Vagina (tissue), 2 donors: ENCODE measurements at regions of chr10 and their contacts with region 1.

Region 1: DNA sequence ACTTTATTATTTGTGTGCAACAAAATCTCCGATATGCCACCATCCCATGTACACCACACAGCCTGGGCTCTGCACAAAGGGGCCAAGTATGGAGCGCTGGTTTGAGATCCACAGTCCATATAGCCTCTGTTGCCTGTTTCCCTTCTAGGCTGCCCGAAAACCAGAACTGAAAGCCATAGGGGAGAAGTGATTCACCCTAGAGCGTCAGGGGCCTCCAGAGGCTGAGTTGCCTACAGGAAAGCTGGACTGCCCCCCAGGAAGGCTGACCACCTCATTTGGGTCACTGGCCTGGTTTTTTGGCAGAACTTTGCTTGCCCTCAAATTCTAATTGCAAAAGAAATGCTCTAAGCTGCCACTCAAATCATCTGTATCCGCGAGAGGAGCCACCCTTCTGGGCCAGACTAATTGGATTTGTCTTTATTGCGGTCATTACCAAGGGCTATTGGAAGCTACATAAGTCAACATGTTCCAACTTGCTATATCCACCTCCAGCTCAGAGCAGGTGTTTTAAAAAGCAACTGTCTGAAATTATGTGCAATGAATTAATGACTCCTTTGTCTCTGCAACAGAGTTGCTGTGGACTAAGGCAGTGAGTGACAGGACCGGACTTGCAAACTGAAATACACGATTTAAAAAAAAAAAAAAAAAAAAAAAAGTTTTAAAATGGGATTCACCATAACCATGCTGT is 28.3 kb upstream of the FRMD4A start:
- DNase-seq: peak in 1 of 2 donors; percentile 44
- H3K4me3 ChIP-seq: no peak overlapping the region
- H3K27ac ChIP-seq: no peak overlapping the region
- H3K4me1 ChIP-seq: no peaks in the 10 kb centered on the region
- H3K27me3 ChIP-seq: no peaks in the 10 kb centered on the region
- CTCF ChIP-seq: no peak
- POLR2A ChIP-seq: no peak

Region 2: DNA sequence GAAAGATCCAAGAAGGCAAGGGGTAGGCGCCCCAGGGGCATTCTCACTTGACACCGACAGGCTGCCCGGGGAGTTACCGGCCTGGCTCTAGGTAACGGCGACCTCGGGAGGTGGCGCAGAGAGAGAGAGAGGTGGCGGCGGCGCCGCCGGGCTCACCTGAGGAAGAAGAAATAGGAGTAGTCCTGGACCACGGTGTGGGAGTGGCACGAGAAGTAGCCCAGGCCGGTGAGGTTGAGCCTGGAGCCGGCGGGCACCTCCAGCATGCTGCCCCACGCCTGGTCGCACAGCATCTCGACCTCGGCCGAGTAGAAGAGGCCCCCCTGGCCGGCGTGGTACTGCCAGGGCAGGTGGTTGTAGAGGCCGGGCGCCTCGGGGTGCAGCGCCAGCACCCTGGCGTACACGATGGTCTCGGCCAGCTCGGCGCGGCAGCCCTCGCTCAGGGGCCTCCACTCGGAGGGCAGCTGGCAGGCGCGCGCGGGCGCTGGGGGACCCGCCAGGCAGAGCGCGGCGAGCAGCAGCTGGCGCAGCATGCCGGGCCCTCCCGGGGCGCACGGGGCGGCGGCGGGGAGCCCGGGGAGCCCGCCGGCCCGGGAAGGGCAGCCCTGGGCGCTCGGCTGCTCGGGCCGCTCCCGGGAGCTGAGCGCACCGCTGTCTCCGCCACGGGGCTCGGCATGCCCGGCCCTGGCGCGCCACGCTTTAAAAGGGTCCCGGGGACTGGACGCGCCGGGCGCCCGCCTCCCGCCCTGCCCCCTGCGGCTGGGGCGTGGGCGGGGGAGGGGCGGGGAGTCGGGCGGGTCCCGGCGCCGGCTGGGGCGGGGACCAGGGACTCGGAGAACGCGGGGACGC is 1357.8 kb before region 1 on chr10 and contains the start of gene CCDC3:
- intact Hi-C with region 1: no loop called
- DNase-seq: no peak
- H3K4me3 ChIP-seq: peak within 1 kb of the TSS; percentile 55 to 56
- H3K27ac ChIP-seq: peak within 1 kb of the TSS; percentile 24
- H3K4me1 ChIP-seq: peaks cover 12% of the 10 kb centered on the region
- H3K27me3 ChIP-seq: no peaks in the 10 kb centered on the region
- CTCF ChIP-seq: no peak
- POLR2A ChIP-seq: no peak
- total RNA-seq, gene CCDC3: 12.8 TPM

Region 3: DNA sequence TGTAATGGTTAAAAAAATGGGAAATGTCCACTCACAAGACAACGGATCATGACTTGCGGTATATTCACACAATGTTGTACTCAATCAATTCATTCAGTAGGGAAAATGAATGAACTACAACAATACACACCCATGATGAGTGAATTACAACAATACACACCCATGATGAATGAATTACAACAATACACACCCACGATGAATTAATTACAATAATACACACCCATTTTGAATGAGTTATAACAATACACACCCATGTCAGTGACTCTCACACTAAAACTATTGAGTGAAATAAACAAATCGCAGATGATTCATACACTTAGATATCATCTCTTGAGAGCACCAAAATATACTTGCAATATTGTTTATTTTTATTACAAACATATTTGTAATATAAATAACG is 202.9 kb before region 1 on chr10:
- intact Hi-C with region 1: loop called (anchors 5 kb)
- DNase-seq: no peak
- H3K4me3 ChIP-seq: no peak overlapping the region
- H3K27ac ChIP-seq: no peak overlapping the region
- H3K4me1 ChIP-seq: no peaks in the 10 kb centered on the region
- H3K27me3 ChIP-seq: no peaks in the 10 kb centered on the region
- CTCF ChIP-seq: no peak
- POLR2A ChIP-seq: no peak

Region 4: DNA sequence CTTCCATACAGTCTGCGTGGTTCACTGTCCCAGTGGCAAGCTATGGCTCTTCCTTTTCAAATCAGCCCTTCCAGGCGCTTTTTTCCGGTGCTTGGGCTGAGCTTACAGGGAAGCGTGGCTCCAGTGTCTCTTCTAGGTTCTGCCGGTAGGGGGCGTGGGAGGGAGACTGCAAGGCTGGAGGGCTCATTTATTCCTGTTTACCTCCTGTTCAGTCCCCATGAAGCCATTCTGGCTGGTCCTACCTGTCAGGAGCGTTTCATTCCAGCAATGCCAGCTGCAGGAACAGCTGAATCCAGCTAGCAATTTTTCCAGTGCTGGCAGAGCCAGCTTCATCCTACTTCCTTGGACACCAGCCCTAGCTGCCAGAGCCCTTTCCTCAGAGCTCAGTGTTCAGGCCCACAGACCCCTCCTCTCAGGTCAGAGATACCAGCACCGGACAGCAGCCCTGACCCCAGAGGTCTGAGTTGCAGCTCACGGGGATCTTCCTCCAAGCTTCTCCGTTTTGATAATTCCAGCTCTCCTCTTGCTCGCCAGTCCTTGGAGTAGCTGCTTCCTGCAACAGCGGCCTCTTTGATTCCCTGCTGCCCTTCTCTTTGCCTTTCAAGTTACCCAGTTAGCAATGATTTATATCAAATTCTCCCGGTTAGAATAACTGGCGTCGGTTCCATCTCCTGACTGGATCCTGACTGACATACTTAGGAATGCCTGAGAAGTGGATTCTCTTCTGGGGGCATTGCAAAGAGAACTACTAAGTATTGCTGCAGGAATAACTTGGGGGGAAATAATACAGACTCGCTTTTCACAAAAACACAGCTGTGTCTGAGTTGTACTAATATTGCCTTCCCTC is 158.1 kb before region 1 on chr10:
- intact Hi-C with region 1: no loop called
- DNase-seq: peak in 1 of 2 donors; percentile 44
- H3K4me3 ChIP-seq: no peak overlapping the region
- H3K27ac ChIP-seq: no peak overlapping the region
- H3K4me1 ChIP-seq: no peaks in the 10 kb centered on the region
- H3K27me3 ChIP-seq: no peaks in the 10 kb centered on the region
- CTCF ChIP-seq: no peak
- POLR2A ChIP-seq: no peak